Activated CD4-positive, alpha-beta T cell treated with anti-CD3 and anti-CD28 coated beads for 36 hours (primary cell): ENCODE measurements at regions of chr15 and their contacts with region 1.

Region 1: DNA sequence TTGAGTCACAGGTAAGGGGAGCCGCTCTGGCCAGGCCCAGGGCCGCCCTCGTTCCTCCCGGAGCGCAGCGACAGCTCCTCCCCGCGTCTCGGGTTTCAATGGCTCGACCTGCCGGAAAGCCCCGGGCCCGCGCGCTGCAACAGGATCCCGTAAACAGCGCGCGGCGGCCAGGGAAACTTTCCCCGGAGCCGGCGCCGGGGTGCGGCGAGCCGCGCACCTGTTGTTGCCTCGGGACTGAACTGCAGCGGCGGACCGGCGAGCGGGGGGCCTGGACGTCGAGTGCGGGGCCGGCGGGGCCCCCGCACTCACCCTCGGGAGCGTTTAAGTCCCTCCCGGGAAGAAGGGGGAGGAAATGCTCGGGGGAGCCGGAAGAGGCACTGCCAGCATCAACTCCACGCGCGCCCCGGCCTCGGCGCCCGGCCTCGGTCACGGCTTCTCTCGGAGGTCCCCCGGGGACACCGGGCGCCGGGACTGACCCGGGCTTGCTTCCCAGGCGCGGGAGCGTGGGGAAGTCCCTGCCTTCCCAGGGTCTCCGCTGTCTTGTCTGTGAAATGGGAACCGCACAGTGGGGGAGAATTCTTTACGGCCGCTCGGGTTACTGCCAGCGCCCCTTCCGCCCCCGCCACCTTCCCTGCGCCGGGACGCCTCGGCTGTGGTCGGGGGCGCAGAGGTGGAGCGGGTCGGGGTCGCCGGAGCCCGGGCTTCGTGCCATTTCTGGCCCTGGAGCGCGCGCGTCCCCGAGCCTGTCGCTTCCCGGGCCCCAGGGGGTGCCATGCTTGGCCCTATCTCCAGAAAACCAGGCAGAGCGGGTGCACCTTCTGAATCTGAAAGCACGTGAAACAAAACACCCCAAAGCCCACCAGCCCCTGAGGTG is 7.4 kb upstream of the PGPEP1L start:
- DNase-seq: peak; percentile 84
- ATAC-seq: peak; percentile 95
- H3K4me3 Mint-ChIP-seq: peak overlapping the region; percentile 61
- H3K27ac Mint-ChIP-seq: no peak overlapping the region
- H3K4me1 Mint-ChIP-seq: peaks cover 10% of the 10 kb centered on the region
- H3K27me3 Mint-ChIP-seq: peaks cover 2% of the 10 kb centered on the region

Region 2: GRCh38 chr15:98727115-98728085 is 287.6 kb before region 1 on chr15:
- CTCF ChIA-PET with region 1: no interaction called
- POLR2A ChIA-PET with region 1: no interaction called
- intact Hi-C with region 1: no loop called
- DNase-seq: no peak
- ATAC-seq: no peak
- H3K4me3 Mint-ChIP-seq: no peak overlapping the region
- H3K27ac Mint-ChIP-seq: no peak overlapping the region
- H3K4me1 Mint-ChIP-seq: peaks cover 35% of the 10 kb centered on the region
- H3K27me3 Mint-ChIP-seq: no peaks in the 10 kb centered on the region

Region 3: GRCh38 chr15:98823012-98823458 is 192.0 kb before region 1 on chr15:
- CTCF ChIA-PET with region 1: no interaction called
- POLR2A ChIA-PET with region 1: no interaction called
- intact Hi-C with region 1: no loop called
- DNase-seq: peak; percentile 12
- ATAC-seq: peak; percentile 73
- H3K4me3 Mint-ChIP-seq: no peak overlapping the region
- H3K27ac Mint-ChIP-seq: no peak overlapping the region
- H3K4me1 Mint-ChIP-seq: peaks cover 6% of the 10 kb centered on the region
- H3K27me3 Mint-ChIP-seq: no peaks in the 10 kb centered on the region

Region 4: GRCh38 chr15:98954411-98954810 is 60.6 kb before region 1 on chr15:
- CTCF ChIA-PET with region 1: no interaction called
- POLR2A ChIA-PET with region 1: no interaction called
- intact Hi-C with region 1: loop called in 1 of 2 experiments (anchors 2 kb)
- DNase-seq: no peak
- ATAC-seq: no peak
- H3K4me3 Mint-ChIP-seq: no peak overlapping the region
- H3K27ac Mint-ChIP-seq: no peak overlapping the region
- H3K4me1 Mint-ChIP-seq: peaks cover 17% of the 10 kb centered on the region
- H3K27me3 Mint-ChIP-seq: no peaks in the 10 kb centered on the region

Region 5: DNA sequence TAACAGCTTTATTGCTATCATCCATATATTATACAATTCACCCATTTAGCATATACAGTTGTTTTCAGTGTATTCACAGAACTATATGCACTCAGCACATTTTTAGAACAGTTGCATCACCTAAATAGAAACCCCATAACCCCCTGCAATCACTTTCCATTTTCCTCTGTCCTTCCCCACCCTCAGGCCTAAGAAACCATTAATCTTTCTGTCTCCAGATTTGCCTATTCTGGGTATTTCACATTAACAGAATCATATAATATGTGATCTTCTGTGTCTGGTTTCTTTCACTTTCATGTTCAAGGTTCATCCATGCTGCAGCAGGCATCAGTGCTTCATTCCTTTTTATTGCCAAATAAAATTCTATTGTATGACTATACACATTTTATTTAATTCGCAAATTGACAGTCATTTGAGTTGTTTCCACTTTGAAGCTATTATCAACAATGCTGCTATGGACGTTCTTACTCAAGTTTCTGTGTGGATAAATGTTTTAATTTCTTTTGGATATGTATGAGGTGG is 1286.9 kb after region 1 on chr15:
- CTCF ChIA-PET with region 1: no interaction called
- POLR2A ChIA-PET with region 1: no interaction called
- intact Hi-C with region 1: no loop called
- DNase-seq: no peak
- ATAC-seq: no peak
- H3K4me3 Mint-ChIP-seq: no peak overlapping the region
- H3K27ac Mint-ChIP-seq: no peak overlapping the region
- H3K4me1 Mint-ChIP-seq: no peaks in the 10 kb centered on the region
- H3K27me3 Mint-ChIP-seq: no peaks in the 10 kb centered on the region